ENCODE measurements at regions of chr1 and their contacts with region 1.

Region 1: DNA sequence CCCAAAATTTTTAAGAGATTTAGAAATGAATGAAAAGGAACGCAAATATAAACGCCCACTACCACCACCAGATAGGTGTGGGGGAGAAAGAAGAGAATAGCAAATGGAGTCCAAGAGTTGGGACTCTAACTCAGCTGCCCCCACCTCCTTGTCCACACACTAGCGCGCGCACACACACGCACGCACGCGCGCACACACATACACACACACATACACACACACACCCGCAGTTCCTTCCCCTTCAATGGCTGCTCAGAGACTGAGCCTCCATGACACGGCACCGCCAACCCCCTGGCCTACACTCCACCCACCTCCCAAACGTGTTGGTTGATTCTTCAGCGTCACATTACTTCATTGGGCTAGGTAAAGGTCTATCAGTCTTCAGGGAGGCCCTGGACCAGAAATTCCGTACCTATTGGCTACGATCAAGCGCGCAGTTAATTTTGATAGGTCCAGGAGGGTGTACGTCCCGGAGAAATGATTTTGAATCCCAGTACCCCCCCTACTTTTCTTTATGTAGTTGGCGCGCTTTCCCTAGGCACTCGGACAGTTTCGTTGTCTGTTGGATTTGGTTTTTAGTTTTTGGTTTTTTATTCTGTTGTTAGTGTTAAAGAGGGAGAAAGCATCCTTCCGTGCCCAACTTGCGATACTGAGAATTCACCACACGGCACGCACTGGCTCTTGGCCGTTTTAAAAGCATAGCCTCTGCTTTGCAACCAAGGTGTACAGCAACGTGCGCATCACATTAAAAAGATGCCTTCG is at the start of gene ANP32E:
- DNase-seq: peak; percentile 100
- H3K4me3 Mint-ChIP-seq: no peak within 1 kb of the TSS
- H3K27ac Mint-ChIP-seq: no peak within 1 kb of the TSS
- H3K4me1 Mint-ChIP-seq: peaks cover 11% of the 10 kb centered on the region
- H3K27me3 Mint-ChIP-seq: no peaks in the 10 kb centered on the region
- CTCF ChIP-seq: no peak
- total RNA-seq, gene ANP32E: 56.5 and 67.3 TPM in 2 replicates

Region 2: DNA sequence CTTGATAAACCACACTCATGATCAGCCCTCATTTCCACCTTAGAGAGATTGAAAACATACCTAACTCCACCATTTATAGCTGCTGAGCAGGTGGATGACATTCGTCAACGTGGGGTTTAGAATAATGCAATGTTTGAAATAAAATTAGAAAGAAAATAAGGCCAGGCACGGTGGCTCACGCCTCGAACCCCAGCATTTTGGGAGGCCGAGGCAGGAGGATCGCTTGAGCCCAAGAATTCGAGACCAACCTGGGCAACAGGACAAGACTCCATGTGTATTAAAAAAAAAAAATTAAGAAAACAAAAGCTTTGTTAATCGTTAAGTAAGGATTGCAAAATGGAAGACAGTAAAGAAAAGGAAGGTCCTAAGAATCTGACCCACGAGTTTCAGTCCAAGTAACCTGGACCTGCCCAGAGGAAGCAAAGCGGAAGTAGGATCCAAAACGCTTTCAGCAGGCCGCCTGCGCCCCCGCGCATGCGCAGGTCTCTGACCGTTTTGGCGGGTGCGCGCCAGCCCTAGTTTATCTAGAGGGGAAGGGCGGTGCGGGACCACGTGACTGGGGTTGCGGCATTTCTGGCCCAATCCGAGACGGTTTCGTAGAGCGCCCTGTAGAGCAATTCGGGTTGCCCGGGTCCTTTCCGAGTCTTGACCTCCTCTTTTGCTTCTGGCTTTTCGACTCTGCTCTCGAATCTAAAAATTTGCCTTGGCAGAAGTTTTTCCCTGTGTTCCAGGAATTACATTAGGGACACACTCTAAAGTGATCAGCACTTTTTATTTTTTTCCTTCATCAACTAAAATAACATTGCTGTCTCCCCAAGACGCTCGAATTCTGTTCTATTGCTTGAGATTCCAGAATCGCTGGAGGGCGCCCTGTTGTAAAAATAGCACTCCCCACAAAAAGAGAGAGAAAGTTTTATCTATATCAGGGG is 22.6 kb before region 1 on chr1:
- CTCF ChIA-PET with region 1: interaction called, 5 read pairs
- POLR2A ChIA-PET with region 1: interaction called, 13 read pairs
- intact Hi-C with region 1: no loop called
- DNase-seq: peak; percentile 95
- H3K4me3 Mint-ChIP-seq: peak overlapping the region; percentile 77
- H3K27ac Mint-ChIP-seq: peak overlapping the region; percentile 91
- H3K4me1 Mint-ChIP-seq: peaks cover 12% of the 10 kb centered on the region
- H3K27me3 Mint-ChIP-seq: no peaks in the 10 kb centered on the region
- CTCF ChIP-seq: peak; percentile 19

Region 3: DNA sequence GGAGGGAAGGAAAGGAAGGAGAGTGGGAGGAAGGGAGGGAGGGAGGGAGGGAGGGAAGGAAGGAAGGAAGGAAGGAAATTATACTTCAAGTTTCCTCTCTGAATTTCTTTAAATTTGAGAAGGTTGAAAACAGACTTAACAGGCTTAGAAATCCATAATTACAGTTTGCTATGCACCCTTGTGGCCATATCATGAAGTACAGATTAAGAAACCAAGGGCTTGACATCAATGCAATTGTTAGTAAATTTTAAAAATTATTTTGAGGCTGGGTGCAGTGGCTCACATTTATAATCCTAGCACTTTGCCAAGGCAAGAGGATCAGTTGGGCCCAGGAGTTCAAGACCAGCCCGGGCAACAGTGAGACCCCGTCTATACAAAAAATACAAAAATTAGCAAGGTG is 14.5 kb before region 1 on chr1:
- CTCF ChIA-PET with region 1: interaction called, 7 read pairs
- POLR2A ChIA-PET with region 1: interaction called, 33 read pairs
- intact Hi-C with region 1: no loop called
- DNase-seq: peak; percentile 38
- H3K4me3 Mint-ChIP-seq: no peak overlapping the region
- H3K27ac Mint-ChIP-seq: no peak overlapping the region
- H3K4me1 Mint-ChIP-seq: no peaks in the 10 kb centered on the region
- H3K27me3 Mint-ChIP-seq: no peaks in the 10 kb centered on the region
- CTCF ChIP-seq: peak; percentile 43

Region 4: DNA sequence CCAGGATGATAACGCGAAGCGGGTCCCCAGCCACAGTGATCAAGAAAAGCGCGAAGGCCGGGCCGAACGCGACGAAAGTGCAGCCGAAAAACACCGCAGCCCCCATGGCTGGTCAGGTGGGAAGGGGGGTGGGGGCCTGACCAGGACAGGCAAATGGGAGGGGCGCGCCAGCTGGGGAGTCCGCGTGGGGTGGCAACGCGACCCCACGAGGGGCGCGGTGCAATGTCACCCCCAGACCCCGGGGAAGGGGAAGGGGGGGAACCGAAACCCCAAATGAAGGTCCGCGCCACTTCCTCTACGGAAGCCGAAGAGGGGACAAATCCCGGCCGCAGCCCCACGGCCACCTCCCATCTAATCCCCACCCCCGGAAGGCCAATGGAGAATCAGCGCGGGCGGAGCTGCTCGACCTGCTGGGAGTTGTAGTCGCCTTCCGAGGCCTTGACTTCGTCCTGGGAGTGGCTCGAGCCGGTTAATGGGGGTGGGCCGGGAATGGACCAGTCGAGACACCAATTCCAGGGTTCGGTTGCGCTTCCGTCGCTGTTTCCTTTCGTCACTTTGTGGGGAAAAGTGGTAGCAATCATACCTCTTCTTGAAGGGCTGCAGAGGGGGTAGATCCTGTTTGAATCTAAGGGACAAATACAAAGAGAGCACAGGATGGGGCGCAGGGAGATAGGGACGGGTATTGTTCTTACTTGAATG is 32.8 kb after region 1 on chr1 and contains the start of gene APH1A:
- CTCF ChIA-PET with region 1: no interaction called
- POLR2A ChIA-PET with region 1: interaction called, 25 read pairs
- intact Hi-C with region 1: no loop called
- DNase-seq: peak; percentile 99
- H3K4me3 Mint-ChIP-seq: peak within 1 kb of the TSS; percentile 81
- H3K27ac Mint-ChIP-seq: peak within 1 kb of the TSS; percentile 83
- H3K4me1 Mint-ChIP-seq: peaks cover 32% of the 10 kb centered on the region
- H3K27me3 Mint-ChIP-seq: no peaks in the 10 kb centered on the region
- CTCF ChIP-seq: no peak
- total RNA-seq, gene APH1A: 123 and 154 TPM in 2 replicates

Region 5: DNA sequence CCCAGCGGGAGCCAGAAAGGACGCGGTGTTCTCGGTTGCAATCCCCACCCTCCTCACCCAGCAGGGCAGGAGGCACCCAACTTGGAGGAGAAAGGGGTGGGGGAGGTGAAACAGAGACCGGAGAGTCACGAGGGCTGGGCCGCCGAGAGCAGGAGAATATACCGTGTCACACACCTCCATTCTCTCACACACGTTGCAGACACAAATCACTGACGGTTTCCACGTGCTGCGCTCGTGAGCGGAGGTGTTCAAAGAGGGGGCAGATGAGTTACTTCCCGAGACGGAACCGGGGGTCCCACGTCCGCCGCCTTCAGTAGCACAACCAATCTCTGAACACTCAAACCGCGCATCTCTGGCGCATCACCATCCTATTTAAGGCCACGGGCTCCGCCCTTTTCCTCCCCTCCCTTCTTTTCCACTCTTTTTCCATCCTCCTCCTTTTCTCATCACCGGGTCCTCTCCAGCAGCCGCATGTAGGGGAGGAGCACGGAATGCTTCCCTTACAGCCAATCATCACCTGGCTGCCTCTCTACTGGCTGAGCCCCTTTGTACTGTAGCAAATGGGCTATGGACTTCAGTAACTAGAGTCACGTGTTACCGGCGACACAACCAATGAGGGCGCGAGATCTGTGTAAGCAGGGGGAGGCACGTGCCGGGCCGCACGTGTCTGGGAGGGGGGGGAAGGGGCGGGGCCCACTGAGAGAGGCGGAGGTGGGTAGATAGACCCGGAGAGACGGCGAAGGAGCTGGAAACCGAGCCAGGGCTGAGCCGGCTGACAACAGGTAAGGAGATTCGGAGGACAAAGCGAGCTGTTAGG is 46.0 kb after region 1 on chr1 and contains the start of gene CIART:
- CTCF ChIA-PET with region 1: interaction called, 4 read pairs
- POLR2A ChIA-PET with region 1: interaction called, 37 read pairs
- intact Hi-C with region 1: loop called (anchors 1 kb)
- DNase-seq: peak; percentile 99
- H3K4me3 Mint-ChIP-seq: peak within 1 kb of the TSS; percentile 83
- H3K27ac Mint-ChIP-seq: peak within 1 kb of the TSS; percentile 94
- H3K4me1 Mint-ChIP-seq: peaks cover 43% of the 10 kb centered on the region
- H3K27me3 Mint-ChIP-seq: no peaks in the 10 kb centered on the region
- CTCF ChIP-seq: no peak
- total RNA-seq, gene CIART: 5.0 and 5.2 TPM in 2 replicates